HCT116 (cell line): ENCODE measurements at regions of chr1 and their contacts with region 1.

Region 1: DNA sequence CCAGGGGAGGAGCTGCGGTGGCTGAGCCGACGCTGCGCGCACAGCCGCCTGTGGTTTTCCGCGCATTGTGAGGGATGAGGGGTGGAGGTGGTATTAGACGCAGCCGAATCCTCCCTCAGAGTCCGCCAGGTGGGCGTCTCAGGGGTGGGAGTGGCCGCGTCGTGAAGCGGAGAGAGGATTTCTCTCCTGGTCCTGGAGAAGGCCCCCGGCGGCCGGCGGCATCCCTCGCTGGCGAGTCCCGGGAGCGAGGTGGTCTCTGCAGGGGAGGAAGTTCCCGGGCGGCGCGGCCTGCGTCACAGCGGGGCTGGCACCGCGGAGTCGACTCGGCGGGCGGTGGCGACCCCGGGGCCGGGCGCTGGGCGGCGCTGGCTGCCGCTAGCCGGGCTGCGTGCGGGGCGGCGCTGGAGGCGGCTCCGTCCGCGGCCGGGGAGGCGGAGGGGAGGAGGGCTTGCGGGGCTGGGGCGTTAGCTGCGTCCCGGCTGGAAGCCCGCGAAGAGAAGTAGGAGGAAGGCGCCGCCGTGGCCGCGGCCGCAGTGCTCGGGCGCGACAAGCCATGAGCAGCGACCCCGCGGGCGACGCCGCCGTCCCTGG is at the start of gene LRRC8C:
- DNase-seq: peak; percentile 41
- ATAC-seq: peak; percentile 90
- H3K4me3 ChIP-seq: peak within 1 kb of the TSS; percentile 55 to 80
- H3K27ac ChIP-seq: peak within 1 kb of the TSS; percentile 80
- H3K4me1 ChIP-seq: peaks cover 8 to 36% of the 10 kb centered on the region in 2 experiments; a peak in 3 of 4 replicates
- H3K27me3 ChIP-seq: no peaks in the 10 kb centered on the region
- CTCF ChIP-seq: 0 out of 6 replicates have a peak, but pooled peaks of 1 of the 3 experiments have one; percentile 8
- POLR2A ChIP-seq: peak; percentile 68
- RAD21 ChIP-seq: 0 out of 2 replicates have a peak, but pooled peaks have one; percentile 8
- total RNA-seq, gene LRRC8C: 8.4 TPM

Region 2: DNA sequence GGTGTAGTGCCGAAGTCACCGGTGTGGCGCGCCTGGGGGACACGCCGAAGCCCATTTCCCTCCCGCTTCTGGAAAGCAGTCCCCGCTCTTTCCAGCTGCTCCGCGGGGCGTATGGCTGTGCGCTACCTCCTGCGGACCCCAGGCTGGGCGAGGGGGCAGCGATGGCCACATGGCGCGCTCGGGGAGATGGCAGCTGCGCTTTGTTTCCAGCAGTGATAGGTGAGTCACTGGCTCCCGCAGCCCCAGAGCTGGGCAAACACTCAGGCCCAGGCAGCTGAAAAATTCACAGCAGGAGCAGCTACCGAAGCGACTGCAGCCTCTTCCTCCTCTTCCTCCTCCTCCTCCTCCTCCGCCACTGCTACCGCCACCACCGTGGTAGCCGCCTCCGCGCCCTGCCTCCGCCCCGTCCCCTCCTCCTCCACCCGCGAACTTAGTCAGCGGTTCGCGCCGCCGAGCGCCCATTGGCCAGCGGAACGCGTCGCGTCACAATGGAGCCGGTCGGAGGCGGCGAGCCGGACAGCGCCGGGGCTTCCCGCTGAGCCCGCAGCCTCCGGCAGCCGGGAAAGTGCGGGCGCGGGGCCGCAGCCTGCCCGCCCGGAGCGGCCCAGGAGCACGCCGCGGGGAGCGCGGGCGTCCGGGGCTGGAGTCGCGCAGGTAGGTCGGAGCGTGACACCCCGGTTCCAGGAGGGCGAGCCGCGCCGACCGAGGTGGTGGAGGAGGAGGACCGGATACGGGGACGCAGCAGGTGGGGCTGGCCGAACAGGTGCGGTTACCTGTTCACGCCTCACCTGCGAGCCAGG is 108.2 kb before region 1 on chr1 and contains the start of gene LRRC8B:
- CTCF ChIA-PET with region 1: no interaction called
- POLR2A ChIA-PET with region 1: no interaction called
- RAD21 ChIA-PET with region 1: no interaction called
- intact Hi-C with region 1: loop called (anchors 10 kb)
- DNase-seq: peak; percentile 74
- ATAC-seq: peak; percentile 92
- H3K4me3 ChIP-seq: peak within 1 kb of the TSS; percentile 88 to 94
- H3K27ac ChIP-seq: peak within 1 kb of the TSS; percentile 89
- H3K4me1 ChIP-seq: peaks cover 9 to 19% of the 10 kb centered on the region in 2 experiments; a peak in 3 of 4 replicates
- H3K27me3 ChIP-seq: no peaks in the 10 kb centered on the region
- CTCF ChIP-seq: no peak
- POLR2A ChIP-seq: peak; percentile 58
- RAD21 ChIP-seq: no peak
- total RNA-seq, gene LRRC8B: 17.9 TPM

Region 3: GRCh38 chr1:89762779-89763648 is 130.3 kb after region 1 on chr1:
- CTCF ChIA-PET with region 1: interaction called, 10 read pairs
- POLR2A ChIA-PET with region 1: no interaction called
- RAD21 ChIA-PET with region 1: no interaction called
- intact Hi-C with region 1: loop called (anchors 1 kb)
- DNase-seq: peak; percentile 28
- ATAC-seq: peak; percentile 100
- H3K4me3 ChIP-seq: no peak overlapping the region; a peak in 1 of 4 replicates
- H3K27ac ChIP-seq: no peak overlapping the region
- H3K4me1 ChIP-seq: peaks cover 0 to 8% of the 10 kb centered on the region in 2 experiments; a peak in 1 of 4 replicates
- H3K27me3 ChIP-seq: no peaks in the 10 kb centered on the region
- CTCF ChIP-seq: peak; percentile 88 to 95 (median 94)
- POLR2A ChIP-seq: no peak
- RAD21 ChIP-seq: peak; percentile 95

Region 4: GRCh38 chr1:89994805-89995597 is 362.2 kb after region 1 on chr1 and contains the start of gene ZNF326:
- CTCF ChIA-PET with region 1: no interaction called
- POLR2A ChIA-PET with region 1: no interaction called
- RAD21 ChIA-PET with region 1: no interaction called
- intact Hi-C with region 1: loop called (anchors 10 kb)
- DNase-seq: peak; percentile 96
- ATAC-seq: peak; percentile 96
- H3K4me3 ChIP-seq: peak within 1 kb of the TSS; percentile 83 to 86
- H3K27ac ChIP-seq: peak within 1 kb of the TSS; percentile 91
- H3K4me1 ChIP-seq: peaks cover 4 to 36% of the 10 kb centered on the region in 2 experiments; a peak in 3 of 4 replicates
- H3K27me3 ChIP-seq: no peaks in the 10 kb centered on the region
- CTCF ChIP-seq: no peak
- POLR2A ChIP-seq: peak; percentile 93
- RAD21 ChIP-seq: no peak
- total RNA-seq, gene ZNF326: 19.3 TPM